GM12878 (cell line): ENCODE measurements at regions of chr1 and their contacts with region 1.

Region 1: GRCh38 chr1:66929999-66930822 is 5.4 kb downstream of the MIER1 start:
- DNase-seq: peak; percentile 61
- ATAC-seq: peak; percentile 76
- H3K4me3 ChIP-seq: peak overlapping the region; percentile 92
- H3K27ac ChIP-seq: peak overlapping the region; percentile 94
- H3K4me1 ChIP-seq: peaks cover 4% of the 10 kb centered on the region; the same call in 1 of the 2 replicates
- H3K27me3 ChIP-seq: no peaks in the 10 kb centered on the region
- CTCF ChIP-seq: peak; percentile 12 to 31 (median 18); a peak in 3 of 6 replicates
- EP300 ChIP-seq: no peak
- POLR2A ChIP-seq: peak; percentile 92
- RAD21 ChIP-seq: no peak

Region 2: DNA sequence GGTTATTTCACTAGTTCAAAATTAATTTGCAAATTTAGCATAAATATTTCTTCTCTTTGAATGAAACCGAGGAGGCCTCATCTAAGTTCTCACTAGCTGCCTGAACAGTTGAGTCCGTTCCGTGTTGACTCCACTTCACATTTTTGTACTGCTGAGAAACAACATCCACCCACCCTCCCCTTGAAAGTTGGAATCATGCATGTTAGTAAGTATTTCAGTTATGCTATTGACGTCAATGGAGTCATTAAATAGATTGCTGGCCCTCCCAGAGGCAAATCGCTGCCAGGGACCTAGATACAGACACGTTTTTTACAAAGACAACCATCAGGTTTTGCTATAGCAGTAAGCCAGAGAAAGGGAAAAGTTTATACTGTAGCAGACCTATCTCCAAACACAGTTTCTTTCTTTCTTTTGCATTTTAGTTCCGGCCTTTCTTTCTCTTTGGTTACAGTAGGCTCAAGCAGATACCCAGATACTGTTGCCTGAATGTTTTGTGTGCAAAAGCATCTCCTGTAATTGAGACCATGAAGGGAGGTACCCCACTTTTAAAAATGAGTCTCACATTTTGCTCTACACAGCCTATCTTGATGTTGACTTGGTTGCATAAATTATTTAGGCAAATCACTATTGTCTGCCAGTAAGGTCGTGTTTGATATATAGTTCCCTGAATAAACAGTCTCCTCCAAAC is 658.9 kb before region 1 on chr1:
- CTCF ChIA-PET with region 1: no interaction called
- POLR2A ChIA-PET with region 1: no interaction called
- RAD21 ChIA-PET with region 1: no interaction called
- SMC1A ChIA-PET with region 1: no interaction called
- in situ Hi-C with region 1: loop called (anchors 25 kb)
- intact Hi-C with region 1: loop called (anchors 10 kb)
- DNase-seq: no peak
- ATAC-seq: peak; percentile 58
- H3K4me3 ChIP-seq: no peak overlapping the region
- H3K27ac ChIP-seq: no peak overlapping the region
- H3K4me1 ChIP-seq: peaks cover 21% of the 10 kb centered on the region
- H3K27me3 ChIP-seq: no peaks in the 10 kb centered on the region
- CTCF ChIP-seq: no peak
- EP300 ChIP-seq: peak; percentile 38 to 77; a peak in 1 of 4 replicates
- POLR2A ChIP-seq: no peak
- RAD21 ChIP-seq: no peak

Region 3: GRCh38 chr1:66944330-66945274 is 14.4 kb after region 1 on chr1:
- CTCF ChIA-PET with region 1: interaction called, 3 read pairs
- POLR2A ChIA-PET with region 1: interaction called, 10 read pairs
- RAD21 ChIA-PET with region 1: interaction called, 4 read pairs
- SMC1A ChIA-PET with region 1: interaction called, 4 read pairs
- in situ Hi-C with region 1: no loop called
- intact Hi-C with region 1: no loop called
- DNase-seq: no peak
- ATAC-seq: no peak
- H3K4me3 ChIP-seq: no peak overlapping the region
- H3K27ac ChIP-seq: no peak overlapping the region
- H3K4me1 ChIP-seq: no peaks in the 10 kb centered on the region
- H3K27me3 ChIP-seq: no peaks in the 10 kb centered on the region
- CTCF ChIP-seq: no peak
- EP300 ChIP-seq: no peak
- POLR2A ChIP-seq: no peak
- RAD21 ChIP-seq: no peak

Region 4: GRCh38 chr1:67162957-67163356 is 232.7 kb after region 1 on chr1:
- CTCF ChIA-PET with region 1: no interaction called
- POLR2A ChIA-PET with region 1: interaction called, 3 read pairs
- RAD21 ChIA-PET with region 1: no interaction called
- SMC1A ChIA-PET with region 1: no interaction called
- in situ Hi-C with region 1: no loop called
- intact Hi-C with region 1: loop called (anchors 5 kb)
- DNase-seq: no peak
- ATAC-seq: peak; percentile 53
- H3K4me3 ChIP-seq: no peak overlapping the region
- H3K27ac ChIP-seq: no peak overlapping the region
- H3K4me1 ChIP-seq: peaks cover 3% of the 10 kb centered on the region; the same call in 1 of the 2 replicates
- H3K27me3 ChIP-seq: no peaks in the 10 kb centered on the region
- CTCF ChIP-seq: no peak
- EP300 ChIP-seq: no peak; a peak in 1 of 4 replicates
- POLR2A ChIP-seq: no peak
- RAD21 ChIP-seq: no peak

Region 5: DNA sequence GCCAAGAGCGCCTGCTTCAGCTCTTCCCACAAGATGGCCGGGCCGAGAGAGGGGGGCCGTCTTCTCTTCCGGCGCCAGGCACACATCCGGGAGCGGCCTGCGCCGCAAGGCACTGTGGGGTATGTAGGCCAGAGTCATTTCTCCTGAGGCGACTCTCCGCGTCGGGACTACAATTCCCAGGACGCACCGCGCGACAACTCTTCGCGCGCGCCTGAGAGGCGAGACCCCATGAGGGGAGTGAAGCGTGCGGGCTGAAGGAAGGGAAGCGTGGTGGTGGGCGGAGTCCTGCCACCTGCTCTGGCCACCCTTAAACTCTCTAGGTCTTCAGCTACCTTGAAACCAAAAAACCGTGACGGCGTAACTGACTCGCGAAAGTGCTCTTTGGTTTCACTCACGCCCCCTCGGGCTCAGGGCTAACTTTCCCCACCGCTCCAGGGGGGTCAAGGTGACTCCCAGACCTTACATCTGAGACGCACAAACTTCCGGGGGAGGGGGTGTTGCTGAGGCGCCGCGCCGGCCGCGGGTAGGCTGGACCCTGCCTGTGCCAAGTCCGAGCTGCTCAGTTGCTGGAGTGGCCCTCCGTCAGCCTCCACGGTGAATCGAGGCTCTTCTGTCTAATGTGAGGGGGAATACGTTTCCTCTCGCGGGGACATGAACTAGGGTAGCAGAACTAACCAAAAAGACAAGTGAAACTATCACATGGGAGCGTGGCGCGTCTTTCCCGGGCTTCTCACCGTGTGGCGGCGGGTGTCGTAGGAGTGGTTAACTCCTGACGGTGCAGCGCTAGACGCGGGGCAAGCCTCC is 500.3 kb after region 1 on chr1 and contains the start of gene SERBP1:
- CTCF ChIA-PET with region 1: no interaction called
- POLR2A ChIA-PET with region 1: no interaction called
- RAD21 ChIA-PET with region 1: interaction called, 3 read pairs
- SMC1A ChIA-PET with region 1: interaction called, 3 read pairs
- in situ Hi-C with region 1: no loop called
- intact Hi-C with region 1: loop called (anchors 2 kb)
- DNase-seq: peak; percentile 98
- ATAC-seq: peak; percentile 86
- H3K4me3 ChIP-seq: peak within 1 kb of the TSS; percentile 91
- H3K27ac ChIP-seq: peak within 1 kb of the TSS; percentile 96
- H3K4me1 ChIP-seq: peaks cover 15% of the 10 kb centered on the region
- H3K27me3 ChIP-seq: no peaks in the 10 kb centered on the region
- CTCF ChIP-seq: no peak
- EP300 ChIP-seq: peak in 1 of 2 experiments; percentile 50; a peak in 2 of 4 replicates
- POLR2A ChIP-seq: peak; percentile 59
- RAD21 ChIP-seq: no peak
- polyA plus RNA-seq, gene SERBP1: 76.7 to 111 TPM